ENCODE measurements at regions of chr2 and their contacts with region 1.

Region 1: DNA sequence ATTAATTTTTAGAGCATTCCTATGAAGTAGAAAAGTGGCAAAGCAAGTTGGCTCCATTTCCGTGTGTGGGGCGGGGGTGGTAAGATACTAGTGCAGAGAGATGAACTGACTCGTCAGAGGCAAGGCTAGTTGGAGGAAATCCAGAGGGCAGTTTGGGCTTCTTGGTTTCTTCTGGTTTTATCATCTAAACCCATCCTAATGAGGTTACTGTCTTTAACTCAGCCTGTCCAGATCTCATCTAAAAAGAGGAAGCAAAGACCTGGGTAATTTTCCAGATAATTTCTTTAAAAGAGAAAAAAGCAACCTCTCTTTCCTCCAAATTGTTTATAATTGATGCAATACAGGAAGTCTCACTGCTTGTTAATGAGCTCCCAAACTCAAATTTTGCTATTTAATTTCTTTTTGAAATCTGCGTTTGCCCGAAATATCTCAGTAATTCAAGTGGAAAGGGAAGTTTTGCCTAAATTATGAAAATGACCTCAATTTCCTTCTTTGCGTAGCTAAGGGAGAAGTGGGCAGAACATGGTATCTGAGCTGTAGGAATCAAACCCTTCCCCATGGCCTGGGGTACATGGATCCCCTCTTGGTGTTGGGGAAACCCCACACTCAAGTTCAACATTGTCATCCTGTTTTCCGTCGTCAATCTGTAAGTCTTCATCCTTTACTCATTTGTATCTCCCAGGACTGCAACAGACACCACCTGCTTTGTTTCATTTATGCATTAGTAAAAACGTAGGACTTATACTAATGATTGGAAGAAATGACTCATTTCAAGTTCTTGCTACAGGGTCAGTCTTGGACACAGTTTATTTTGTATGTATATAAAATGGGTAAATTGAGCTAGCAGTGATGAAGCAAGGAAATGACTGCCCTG is 89.1 kb upstream of the KLF7 start:
- DNase-seq: no peak
- ATAC-seq: no peak

Region 2: DNA sequence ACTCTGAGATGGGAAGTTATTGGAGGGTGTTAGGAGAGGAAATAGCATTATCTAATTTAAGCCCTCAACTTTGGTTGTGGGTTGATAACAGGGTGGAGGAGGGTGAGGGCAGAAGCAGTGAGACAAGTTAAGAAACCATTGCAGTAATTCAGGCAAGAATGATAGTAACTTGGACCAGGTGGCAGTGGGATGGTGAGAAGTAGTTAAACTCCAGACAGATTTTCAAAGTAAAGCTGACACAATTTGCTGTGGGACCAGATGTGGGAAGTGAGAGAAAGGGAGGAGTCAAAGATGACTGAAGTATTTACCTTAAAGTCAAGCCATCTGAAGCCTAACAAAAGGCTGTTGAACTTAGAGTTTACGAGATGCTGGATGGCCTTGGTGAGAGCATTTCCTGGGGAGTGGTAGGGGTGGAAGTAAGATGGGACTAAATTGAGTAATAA is 74.1 kb after region 1 on chr2:
- intact Hi-C with region 1: loop called (anchors 2 kb)
- DNase-seq: no peak
- ATAC-seq: no peak

Region 3: DNA sequence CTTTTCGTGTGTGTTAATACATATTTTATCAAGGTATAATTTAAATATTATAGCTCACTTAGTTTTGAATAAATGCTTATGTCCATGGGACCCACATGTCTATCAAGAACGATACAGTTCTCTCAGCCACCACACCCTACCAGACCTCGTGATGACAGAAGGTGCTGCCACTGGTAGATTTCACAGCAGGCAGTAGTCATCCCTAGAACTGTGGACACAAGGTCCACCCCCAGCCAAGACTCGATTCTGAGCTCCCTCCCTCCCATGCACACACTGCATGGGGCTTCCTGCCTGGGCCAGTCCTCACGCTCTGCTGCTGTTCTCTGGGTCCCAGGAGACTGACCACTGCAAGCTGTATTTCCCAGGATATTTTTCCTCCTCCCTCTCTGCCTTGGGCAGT is 248.4 kb after region 1 on chr2:
- intact Hi-C with region 1: no loop called
- DNase-seq: no peak
- ATAC-seq: peak; percentile 16

Measured in sciatic nerve (tissue), 2 donors.